ENCODE measurements at regions of chr9 and their contacts with region 1.

Region 1: DNA sequence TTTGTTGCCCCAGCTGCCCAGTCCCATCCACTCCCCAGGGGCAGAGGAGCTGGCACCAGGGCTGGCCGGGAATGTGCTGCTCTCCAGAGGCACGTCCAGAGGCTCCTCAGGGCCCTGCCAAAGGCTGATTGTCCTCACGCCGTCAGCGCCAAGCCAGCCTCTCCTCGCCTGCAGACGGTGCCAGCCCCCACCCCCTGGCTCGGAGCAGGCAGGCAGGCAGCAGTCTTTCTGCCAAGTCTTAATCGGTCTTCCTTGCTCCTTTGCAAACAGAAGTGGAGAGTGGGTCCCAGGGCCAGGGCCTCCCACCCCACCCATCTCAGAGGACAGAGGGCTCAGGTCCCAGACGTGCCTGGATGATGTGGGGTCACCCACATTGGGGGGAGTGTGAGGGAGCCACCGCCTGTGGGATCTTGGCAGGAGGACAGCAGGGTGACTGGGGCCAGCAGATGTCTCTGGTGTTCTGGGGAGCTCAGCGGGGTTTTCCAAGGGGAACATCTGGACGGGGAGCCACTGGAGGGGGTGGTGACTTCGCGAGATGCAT is 36.3 kb downstream of the FAM163B start:
- DNase-seq: peak; percentile 40 to 90 (median 86)
- H3K4me3 ChIP-seq: peak overlapping the region in 29 of 59 donors; percentile 4 to 55 (median 20)
- H3K27ac ChIP-seq: peak overlapping the region in 52 of 59 donors; percentile 7 to 81 (median 63)
- H3K27me3 ChIP-seq: no peaks in the 10 kb centered on the region
- CTCF ChIP-seq: peak in 19 of 56 donors; percentile 2 to 55 (median 23)

Region 2: GRCh38 chr9:133509179-133510079 is 63.5 kb before region 1 on chr9:
- intact Hi-C with region 1: loop called in 1 of 2 experiments (anchors 2 kb)
- DNase-seq: peak in 4 of 10 donors; percentile 29 to 66 (median 56)
- H3K4me3 ChIP-seq: peak overlapping the region in 26 of 59 donors; percentile 2 to 50 (median 15)
- H3K27ac ChIP-seq: peak overlapping the region in 58 of 59 donors; percentile 1 to 93 (median 77)
- H3K27me3 ChIP-seq: no peaks in the 10 kb centered on the region
- CTCF ChIP-seq: peak in 20 of 56 donors; percentile 9 to 52 (median 24)

Region 3: GRCh38 chr9:133589454-133590227 is 16.8 kb after region 1 on chr9:
- intact Hi-C with region 1: no loop called
- DNase-seq: no peak
- H3K4me3 ChIP-seq: no peak overlapping the region
- H3K27ac ChIP-seq: no peak overlapping the region
- H3K27me3 ChIP-seq: peaks cover 0 to 7% (median 0%) of the 10 kb centered on the region in 45 donors
- CTCF ChIP-seq: peak in 43 of 56 donors; percentile 10 to 57 (median 35)